GM12878 (cell line): ENCODE measurements at regions of chr5 and their contacts with region 1.

Region 1: DNA sequence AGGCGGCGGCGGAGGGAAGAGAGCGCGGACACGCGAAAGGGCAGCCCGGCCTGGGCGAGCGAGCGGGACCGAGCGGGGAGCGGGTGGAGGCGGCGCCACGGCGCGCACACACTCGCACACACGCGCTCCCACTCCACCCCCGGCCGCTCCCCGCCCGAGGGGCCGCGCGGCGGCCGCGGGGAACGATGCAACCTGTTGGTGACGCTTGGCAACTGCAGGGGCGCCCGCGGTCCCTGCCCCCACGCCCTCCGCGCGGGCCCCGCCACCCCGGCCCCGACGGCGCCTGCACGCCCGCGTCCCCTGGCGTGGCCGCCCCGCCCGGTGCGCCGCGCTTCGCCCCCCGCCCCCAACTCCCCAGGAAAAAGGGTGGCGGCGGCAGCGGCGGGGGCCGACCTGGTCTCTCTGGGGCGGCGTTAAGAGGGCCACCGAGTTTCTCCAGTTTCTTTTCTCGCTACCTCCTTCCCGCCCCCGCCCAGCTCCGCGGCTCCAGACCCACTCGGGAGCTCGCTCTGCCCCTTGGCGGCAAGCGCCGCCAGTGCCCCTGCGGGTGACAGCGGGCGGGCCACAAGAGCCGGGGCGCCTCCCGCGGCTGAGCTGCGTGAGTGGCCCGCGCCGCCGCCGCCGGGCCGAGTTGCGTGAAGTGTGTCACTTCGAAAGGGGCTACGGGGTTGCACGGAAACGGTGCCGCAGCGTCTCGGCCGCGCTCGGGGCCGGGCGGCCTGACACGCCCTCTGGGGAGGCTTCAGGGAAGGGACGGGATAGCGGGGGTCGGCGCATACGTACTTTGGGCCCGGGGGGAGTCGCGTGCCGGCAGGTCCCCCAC is at the start of gene NR3C1:
- DNase-seq: no peak
- ATAC-seq: peak; percentile 51
- H3K4me3 ChIP-seq: peak within 1 kb of the TSS; percentile 83
- H3K27ac ChIP-seq: peak within 1 kb of the TSS; percentile 99
- H3K4me1 ChIP-seq: no peaks in the 10 kb centered on the region
- H3K27me3 ChIP-seq: no peaks in the 10 kb centered on the region
- CTCF ChIP-seq: peak; percentile 38 to 76 (median 64); a peak in 5 of 6 replicates
- EP300 ChIP-seq: peak; percentile 25 to 38; a peak in 2 of 4 replicates
- POLR2A ChIP-seq: peak; percentile 78
- RAD21 ChIP-seq: peak; percentile 67
- polyA plus RNA-seq, gene NR3C1: 89.0 to 119 TPM

Region 2: GRCh38 chr5:142922223-142922952 is 481.4 kb before region 1 on chr5:
- CTCF ChIA-PET with region 1: interaction called, 5 read pairs
- POLR2A ChIA-PET with region 1: interaction called, 3 read pairs
- RAD21 ChIA-PET with region 1: interaction called, 6 read pairs
- SMC1A ChIA-PET with region 1: interaction called, 3 read pairs
- in situ Hi-C with region 1: no loop called
- intact Hi-C with region 1: loop called (anchors 5 kb)
- DNase-seq: peak; percentile 21
- ATAC-seq: peak; percentile 92
- H3K4me3 ChIP-seq: no peak overlapping the region
- H3K27ac ChIP-seq: no peak overlapping the region
- H3K4me1 ChIP-seq: no peaks in the 10 kb centered on the region
- H3K27me3 ChIP-seq: no peaks in the 10 kb centered on the region
- CTCF ChIP-seq: peak; percentile 41 to 66 (median 48); a peak in 4 of 6 replicates
- EP300 ChIP-seq: no peak
- POLR2A ChIP-seq: no peak
- RAD21 ChIP-seq: peak; percentile 68

Region 3: DNA sequence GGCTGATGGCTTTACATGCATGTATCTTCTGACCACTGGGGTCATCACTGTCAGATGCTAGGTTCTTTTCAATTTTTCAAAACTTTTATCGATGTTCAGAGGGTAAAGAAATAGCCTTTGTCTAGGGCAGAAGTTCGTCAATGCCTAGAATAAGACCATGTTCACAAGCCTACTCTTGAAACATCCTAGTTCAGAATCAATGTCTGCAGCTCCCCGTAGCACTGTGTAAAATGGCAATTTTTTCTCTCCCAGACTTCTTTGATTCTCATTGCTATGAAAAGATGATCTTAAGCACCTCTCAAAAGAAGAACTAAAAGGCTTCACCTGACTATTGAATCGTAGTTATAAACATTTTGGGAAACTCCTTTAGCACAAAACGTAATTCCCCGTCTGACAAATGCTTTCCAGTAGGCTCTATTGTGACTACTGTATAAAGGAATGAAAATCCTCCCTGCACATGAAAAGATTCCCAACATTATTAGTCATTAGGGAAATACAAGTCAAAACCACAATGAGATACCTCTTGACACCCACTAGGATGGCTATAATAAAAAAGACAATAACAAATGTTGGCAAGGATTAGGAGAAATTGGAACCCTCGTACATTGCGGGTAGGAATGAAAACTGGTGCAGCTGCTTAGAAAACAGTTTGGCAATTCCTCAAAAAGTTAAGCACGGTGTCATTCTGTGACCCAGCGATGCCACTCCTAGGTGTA is 370.1 kb before region 1 on chr5:
- CTCF ChIA-PET with region 1: no interaction called
- POLR2A ChIA-PET with region 1: no interaction called
- RAD21 ChIA-PET with region 1: interaction called, 12 read pairs
- SMC1A ChIA-PET with region 1: interaction called, 6 read pairs
- in situ Hi-C with region 1: loop called (anchors 10 kb)
- intact Hi-C with region 1: no loop called
- DNase-seq: no peak
- ATAC-seq: no peak
- H3K4me3 ChIP-seq: no peak overlapping the region
- H3K27ac ChIP-seq: no peak overlapping the region
- H3K4me1 ChIP-seq: peaks cover 23% of the 10 kb centered on the region
- H3K27me3 ChIP-seq: no peaks in the 10 kb centered on the region
- CTCF ChIP-seq: no peak
- EP300 ChIP-seq: no peak
- POLR2A ChIP-seq: no peak
- RAD21 ChIP-seq: no peak

Region 4: GRCh38 chr5:143206196-143207053 is 197.4 kb before region 1 on chr5:
- CTCF ChIA-PET with region 1: interaction called, 9 read pairs
- POLR2A ChIA-PET with region 1: interaction called, 13 read pairs
- RAD21 ChIA-PET with region 1: interaction called, 121 read pairs
- SMC1A ChIA-PET with region 1: interaction called, 70 read pairs
- in situ Hi-C with region 1: no loop called
- intact Hi-C with region 1: loop called (anchors 2 kb)
- DNase-seq: peak; percentile 98
- ATAC-seq: peak; percentile 71
- H3K4me3 ChIP-seq: peak overlapping the region; percentile 21; the same call in 1 of the 2 replicates
- H3K27ac ChIP-seq: peak overlapping the region; percentile 94
- H3K4me1 ChIP-seq: peaks cover 52% of the 10 kb centered on the region
- H3K27me3 ChIP-seq: no peaks in the 10 kb centered on the region
- CTCF ChIP-seq: peak in 1 of 3 experiments; percentile 13; a peak in 1 of 6 replicates
- EP300 ChIP-seq: peak; percentile 76 to 91; a peak in 2 of 4 replicates
- POLR2A ChIP-seq: peak; percentile 61; the same call in 1 of the 2 replicates
- RAD21 ChIP-seq: peak; percentile 40

Region 5: DNA sequence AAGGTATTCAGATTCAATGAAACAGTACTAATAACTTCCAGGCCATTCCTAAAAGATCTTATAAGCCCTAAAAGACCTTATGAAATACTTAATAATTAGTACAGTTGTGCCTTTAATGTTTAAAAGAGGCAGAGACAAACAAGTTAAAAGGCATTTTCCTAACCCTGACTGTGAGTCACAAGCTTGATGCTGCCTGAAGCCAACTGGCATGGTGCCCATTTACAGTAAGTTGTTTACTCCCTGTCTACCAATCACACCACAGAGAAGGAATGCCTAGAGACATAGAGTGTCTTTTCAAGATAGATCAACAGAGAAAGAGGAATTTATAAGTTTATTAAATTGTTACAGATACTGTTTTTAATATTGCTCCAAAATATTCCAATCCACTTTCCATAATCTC is 48.1 kb before region 1 on chr5:
- CTCF ChIA-PET with region 1: interaction called, 3 read pairs
- POLR2A ChIA-PET with region 1: interaction called, 4 read pairs
- RAD21 ChIA-PET with region 1: interaction called, 8 read pairs
- SMC1A ChIA-PET with region 1: interaction called, 13 read pairs
- in situ Hi-C with region 1: no loop called
- intact Hi-C with region 1: loop called (anchors 2 kb)
- DNase-seq: no peak
- ATAC-seq: peak; percentile 25; the same call in 2 of the 3 replicates
- H3K4me3 ChIP-seq: no peak overlapping the region
- H3K27ac ChIP-seq: no peak overlapping the region
- H3K4me1 ChIP-seq: peaks cover 54% of the 10 kb centered on the region
- H3K27me3 ChIP-seq: no peaks in the 10 kb centered on the region
- CTCF ChIP-seq: no peak
- EP300 ChIP-seq: no peak
- POLR2A ChIP-seq: no peak
- RAD21 ChIP-seq: no peak

Region 6: DNA sequence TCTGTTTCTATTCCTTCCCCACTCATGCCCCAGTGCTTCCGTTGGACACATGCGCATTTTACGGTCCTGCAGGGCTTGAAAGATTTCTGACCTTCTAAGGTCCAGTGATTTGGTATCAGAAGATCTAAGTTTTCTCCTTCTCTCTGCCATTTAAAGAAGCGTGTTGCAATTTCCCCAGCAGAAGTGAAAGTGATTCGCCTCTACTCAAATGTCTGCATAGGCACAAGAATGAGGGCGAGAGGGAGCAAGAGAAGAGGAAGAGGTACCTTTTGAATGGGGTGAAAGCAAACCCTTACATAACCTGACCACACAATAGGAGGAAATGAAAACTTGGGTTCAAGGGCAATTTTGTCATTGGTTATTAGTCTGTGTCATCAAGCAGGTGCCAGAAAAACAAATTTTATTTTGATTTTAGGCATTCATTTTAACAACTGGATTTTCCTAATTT is 31.4 kb after region 1 on chr5:
- CTCF ChIA-PET with region 1: interaction called, 34 read pairs
- POLR2A ChIA-PET with region 1: interaction called, 138 read pairs
- RAD21 ChIA-PET with region 1: interaction called, 187 read pairs
- SMC1A ChIA-PET with region 1: interaction called, 260 read pairs
- in situ Hi-C with region 1: no loop called
- intact Hi-C with region 1: loop called (anchors 1 kb)
- DNase-seq: peak; percentile 98
- ATAC-seq: peak; percentile 81
- H3K4me3 ChIP-seq: peak overlapping the region; percentile 49; the same call in 1 of the 2 replicates
- H3K27ac ChIP-seq: peak overlapping the region; percentile 89
- H3K4me1 ChIP-seq: peaks cover 16% of the 10 kb centered on the region
- H3K27me3 ChIP-seq: no peaks in the 10 kb centered on the region
- CTCF ChIP-seq: no peak
- EP300 ChIP-seq: peak; percentile 88 to 96
- POLR2A ChIP-seq: 0 out of 2 replicates have a peak, but pooled peaks have one; percentile 33
- RAD21 ChIP-seq: peak; percentile 42; the same call in 1 of the 2 replicates

Region 7: GRCh38 chr5:143968011-143968878 is 564.4 kb after region 1 on chr5:
- CTCF ChIA-PET with region 1: interaction called, 5 read pairs
- POLR2A ChIA-PET with region 1: no interaction called
- RAD21 ChIA-PET with region 1: interaction called, 3 read pairs
- SMC1A ChIA-PET with region 1: no interaction called
- in situ Hi-C with region 1: no loop called
- intact Hi-C with region 1: loop called (anchors 5 kb)
- DNase-seq: peak; percentile 34
- ATAC-seq: peak; percentile 86
- H3K4me3 ChIP-seq: no peak overlapping the region
- H3K27ac ChIP-seq: no peak overlapping the region
- H3K4me1 ChIP-seq: no peaks in the 10 kb centered on the region
- H3K27me3 ChIP-seq: no peaks in the 10 kb centered on the region; a peak in 1 of 4 replicates
- CTCF ChIP-seq: peak; percentile 46 to 63 (median 56); a peak in 5 of 6 replicates
- EP300 ChIP-seq: no peak
- POLR2A ChIP-seq: no peak
- RAD21 ChIP-seq: peak; percentile 69